ENCODE measurements at regions of chr3 and their contacts with region 1.

Region 1: DNA sequence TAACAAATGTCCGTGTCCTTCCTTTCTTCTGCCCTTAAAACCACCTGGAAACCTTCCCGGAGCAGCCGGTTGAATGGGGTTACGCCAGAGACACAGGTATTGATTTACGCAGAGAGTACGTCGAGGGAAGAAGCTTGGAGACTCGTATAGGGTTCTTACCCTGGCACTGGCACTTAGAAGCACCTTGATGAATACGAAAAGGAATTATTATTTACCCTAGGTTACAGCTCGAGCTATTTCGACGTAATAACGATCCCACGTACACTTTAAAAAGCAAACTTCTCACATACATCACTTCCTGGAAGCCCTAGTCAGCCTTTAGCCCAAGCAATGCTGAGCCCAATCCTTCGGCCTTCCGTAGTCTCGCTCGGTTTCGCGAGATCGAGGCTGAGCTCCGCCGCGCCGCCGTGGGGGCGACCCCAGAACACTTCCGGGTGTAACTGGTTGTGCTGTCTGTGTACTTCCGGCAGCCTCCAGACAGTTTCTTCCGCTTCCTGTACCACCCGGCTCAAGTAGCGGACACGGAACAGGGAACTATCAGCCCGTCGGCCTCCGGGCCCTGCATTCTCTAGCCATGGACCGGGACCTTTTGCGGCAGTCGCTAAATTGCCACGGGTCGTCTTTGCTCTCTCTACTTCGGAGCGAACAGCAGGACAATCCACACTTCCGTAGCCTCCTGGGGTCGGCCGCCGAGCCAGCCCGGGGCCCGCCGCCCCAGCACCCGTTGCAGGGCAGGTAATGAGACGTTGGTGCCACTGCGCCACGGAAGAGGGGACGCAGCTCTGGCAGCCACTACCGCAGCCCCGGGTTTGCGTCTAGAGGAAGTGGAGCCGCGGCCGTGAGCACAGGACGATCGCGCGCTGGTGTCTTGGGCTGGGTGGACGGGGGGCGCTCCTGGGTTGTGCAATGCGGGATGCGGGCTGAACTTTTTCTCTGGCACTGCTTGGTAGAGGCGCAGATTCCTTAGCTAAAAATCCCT is at the start of gene TTC14:
- DNase-seq: peak; percentile 96
- H3K4me3 ChIP-seq: peak within 1 kb of the TSS; percentile 84
- H3K27ac ChIP-seq: peak within 1 kb of the TSS; percentile 90
- H3K4me1 ChIP-seq: peaks cover 13% of the 10 kb centered on the region
- CTCF ChIP-seq: peak; percentile 60
- total RNA-seq, gene TTC14: 40.6 and 52.4 TPM in 2 replicates

Region 2: DNA sequence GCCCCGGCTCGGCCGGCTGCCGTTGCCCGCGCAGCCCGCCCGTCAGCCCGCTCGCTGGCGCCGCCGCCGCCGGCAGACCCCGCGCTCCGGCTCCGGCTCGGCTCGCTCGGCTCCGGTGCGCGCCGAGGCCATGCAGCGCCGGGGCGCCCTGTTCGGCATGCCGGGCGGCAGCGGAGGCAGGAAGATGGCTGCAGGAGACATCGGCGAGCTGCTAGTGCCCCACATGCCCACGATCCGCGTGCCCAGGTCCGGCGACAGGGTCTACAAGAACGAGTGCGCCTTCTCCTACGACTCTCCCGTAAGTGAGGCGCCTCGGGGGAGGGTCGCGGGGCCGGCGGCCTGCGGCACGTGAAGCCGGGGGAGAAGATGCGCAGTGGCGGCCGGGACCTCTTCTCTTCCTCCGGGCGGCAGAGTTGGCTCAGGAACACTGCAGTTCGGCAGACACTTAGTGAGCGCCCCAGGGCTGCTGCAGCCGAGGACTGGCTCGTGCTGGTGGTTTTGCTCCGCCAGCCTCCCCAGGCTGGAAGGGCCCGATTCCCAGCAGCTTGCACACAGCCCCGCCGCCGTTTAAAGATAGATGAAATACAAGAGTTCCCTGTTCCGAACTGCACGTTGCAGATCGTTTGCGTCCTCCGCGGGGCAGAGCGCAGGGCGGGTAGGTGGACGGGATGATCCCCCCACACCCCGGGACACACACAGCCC is 948.7 kb before region 1 on chr3:
- CTCF ChIA-PET with region 1: no interaction called
- POLR2A ChIA-PET with region 1: no interaction called
- intact Hi-C with region 1: loop called (anchors 5 kb)
- DNase-seq: peak; percentile 84
- H3K4me3 ChIP-seq: peak overlapping the region; percentile 96
- H3K27ac ChIP-seq: peak overlapping the region; percentile 81
- H3K4me1 ChIP-seq: peaks cover 32% of the 10 kb centered on the region
- CTCF ChIP-seq: peak; percentile 25; the same call in 1 of the 2 replicates

Region 3: DNA sequence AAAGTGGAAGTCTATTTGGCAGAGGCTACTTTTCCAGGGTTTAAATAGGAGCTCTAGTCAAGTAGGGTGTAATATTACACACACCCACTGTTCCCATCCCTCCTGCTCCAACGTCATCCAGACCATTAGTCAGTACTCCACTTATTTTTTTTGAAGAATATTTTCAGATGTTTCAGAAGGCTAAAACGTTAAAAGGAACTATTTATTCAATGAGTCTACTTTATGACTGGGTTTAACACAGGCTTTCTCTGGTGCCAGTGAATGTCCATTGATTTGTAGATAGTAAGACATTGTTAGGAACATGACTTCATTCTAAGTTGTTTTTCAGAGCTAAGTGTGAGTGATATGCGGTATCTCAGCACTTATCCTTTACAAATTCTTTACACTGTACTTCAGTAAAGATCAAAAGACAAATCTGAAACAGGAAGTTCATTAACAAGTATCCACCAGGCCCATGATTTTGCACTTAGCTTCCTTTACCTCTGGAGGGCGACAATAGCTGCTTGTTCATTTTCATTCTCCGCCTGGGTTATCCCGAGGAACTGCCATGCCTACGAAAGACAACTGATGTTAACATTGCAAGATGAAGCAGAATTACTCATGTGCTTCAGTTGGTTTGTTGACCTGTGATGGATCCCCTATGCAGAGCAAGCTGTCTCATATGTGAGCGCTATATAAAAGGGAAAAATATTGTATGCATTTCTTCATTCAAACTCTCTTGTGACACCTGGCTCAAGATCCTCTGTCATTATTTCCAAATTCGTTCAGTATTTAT is 790.5 kb before region 1 on chr3:
- CTCF ChIA-PET with region 1: no interaction called
- POLR2A ChIA-PET with region 1: no interaction called
- intact Hi-C with region 1: loop called (anchors 5 kb)
- DNase-seq: peak; percentile 77
- H3K4me3 ChIP-seq: no peak overlapping the region
- H3K27ac ChIP-seq: no peak overlapping the region
- H3K4me1 ChIP-seq: peaks cover 5% of the 10 kb centered on the region
- CTCF ChIP-seq: peak; percentile 94

Region 4: DNA sequence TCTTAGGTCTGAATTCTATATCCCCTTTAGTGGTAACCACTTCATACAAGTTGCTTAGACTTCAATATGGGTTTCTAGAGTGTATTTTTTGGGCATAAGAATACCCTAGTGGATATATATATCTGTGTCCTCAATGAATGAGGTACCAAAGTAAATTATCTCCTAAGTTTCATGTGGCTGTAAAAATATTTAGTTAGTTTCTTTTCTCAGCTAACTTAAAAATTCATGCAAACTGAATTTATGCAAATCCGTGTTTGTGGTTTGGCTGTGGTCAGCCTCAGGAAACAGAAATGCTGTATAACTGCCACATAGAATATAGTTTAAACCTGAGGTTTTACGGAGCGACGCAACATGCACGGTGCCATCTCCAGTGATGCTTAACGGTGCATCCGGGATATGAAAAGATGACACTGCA is 645.6 kb before region 1 on chr3:
- CTCF ChIA-PET with region 1: no interaction called
- POLR2A ChIA-PET with region 1: interaction called, 4 read pairs
- intact Hi-C with region 1: loop called (anchors 5 kb)
- DNase-seq: peak; percentile 90
- H3K4me3 ChIP-seq: peak overlapping the region; percentile 35
- H3K27ac ChIP-seq: peak overlapping the region; percentile 74
- H3K4me1 ChIP-seq: peaks cover 67% of the 10 kb centered on the region
- CTCF ChIP-seq: no peak

Region 5: GRCh38 chr3:180612364-180612763 is 10.4 kb after region 1 on chr3:
- CTCF ChIA-PET with region 1: no interaction called
- POLR2A ChIA-PET with region 1: interaction called, 10 read pairs
- intact Hi-C with region 1: no loop called
- DNase-seq: no peak
- H3K4me3 ChIP-seq: no peak overlapping the region
- H3K27ac ChIP-seq: no peak overlapping the region
- H3K4me1 ChIP-seq: no peaks in the 10 kb centered on the region
- CTCF ChIP-seq: no peak

Region 6: DNA sequence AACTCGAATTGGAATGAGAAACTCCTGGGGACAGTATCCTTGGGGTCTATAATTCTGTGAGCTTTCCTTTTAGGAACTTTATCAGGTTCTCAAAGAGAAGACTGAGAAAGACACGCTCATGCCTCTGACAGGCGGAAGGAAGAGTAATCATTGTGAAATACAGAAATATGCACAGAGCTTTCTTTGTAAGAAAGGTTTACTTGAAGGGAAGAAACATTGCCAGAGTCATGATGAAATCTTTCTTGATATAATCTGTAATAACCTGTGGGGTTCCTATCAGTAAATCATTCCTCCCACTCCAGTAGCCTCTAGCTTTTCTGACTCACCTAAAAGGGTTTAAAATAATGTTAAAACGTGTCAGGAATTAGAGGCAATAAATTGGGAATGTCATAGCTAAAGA is 160.9 kb after region 1 on chr3:
- CTCF ChIA-PET with region 1: no interaction called
- POLR2A ChIA-PET with region 1: no interaction called
- intact Hi-C with region 1: no loop called
- DNase-seq: no peak
- H3K4me3 ChIP-seq: no peak overlapping the region
- H3K27ac ChIP-seq: no peak overlapping the region
- H3K4me1 ChIP-seq: no peaks in the 10 kb centered on the region
- CTCF ChIP-seq: no peak

Region 7: DNA sequence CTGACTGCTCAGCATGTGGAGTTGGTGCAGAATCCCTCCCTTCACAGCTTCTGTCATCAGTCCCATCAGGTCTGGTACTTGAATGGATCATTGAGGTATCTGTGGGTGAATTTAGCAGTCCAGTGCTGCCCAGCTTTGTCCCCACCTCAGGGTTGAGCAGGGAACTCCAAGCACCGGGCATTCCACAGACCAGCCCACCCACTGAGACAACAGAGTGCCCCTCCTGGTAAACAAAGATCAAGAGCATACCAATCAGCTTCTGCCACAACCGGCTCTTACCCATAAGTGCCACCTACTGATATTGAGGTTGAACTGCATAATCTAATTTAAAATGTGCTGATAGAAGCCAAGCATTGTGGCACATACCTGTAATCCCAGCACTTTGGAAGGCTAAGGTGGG is 253.4 kb after region 1 on chr3:
- CTCF ChIA-PET with region 1: no interaction called
- POLR2A ChIA-PET with region 1: no interaction called
- intact Hi-C with region 1: no loop called
- DNase-seq: peak; percentile 20
- H3K4me3 ChIP-seq: no peak overlapping the region
- H3K27ac ChIP-seq: no peak overlapping the region
- H3K4me1 ChIP-seq: no peaks in the 10 kb centered on the region
- CTCF ChIP-seq: peak; percentile 63

Region 8: DNA sequence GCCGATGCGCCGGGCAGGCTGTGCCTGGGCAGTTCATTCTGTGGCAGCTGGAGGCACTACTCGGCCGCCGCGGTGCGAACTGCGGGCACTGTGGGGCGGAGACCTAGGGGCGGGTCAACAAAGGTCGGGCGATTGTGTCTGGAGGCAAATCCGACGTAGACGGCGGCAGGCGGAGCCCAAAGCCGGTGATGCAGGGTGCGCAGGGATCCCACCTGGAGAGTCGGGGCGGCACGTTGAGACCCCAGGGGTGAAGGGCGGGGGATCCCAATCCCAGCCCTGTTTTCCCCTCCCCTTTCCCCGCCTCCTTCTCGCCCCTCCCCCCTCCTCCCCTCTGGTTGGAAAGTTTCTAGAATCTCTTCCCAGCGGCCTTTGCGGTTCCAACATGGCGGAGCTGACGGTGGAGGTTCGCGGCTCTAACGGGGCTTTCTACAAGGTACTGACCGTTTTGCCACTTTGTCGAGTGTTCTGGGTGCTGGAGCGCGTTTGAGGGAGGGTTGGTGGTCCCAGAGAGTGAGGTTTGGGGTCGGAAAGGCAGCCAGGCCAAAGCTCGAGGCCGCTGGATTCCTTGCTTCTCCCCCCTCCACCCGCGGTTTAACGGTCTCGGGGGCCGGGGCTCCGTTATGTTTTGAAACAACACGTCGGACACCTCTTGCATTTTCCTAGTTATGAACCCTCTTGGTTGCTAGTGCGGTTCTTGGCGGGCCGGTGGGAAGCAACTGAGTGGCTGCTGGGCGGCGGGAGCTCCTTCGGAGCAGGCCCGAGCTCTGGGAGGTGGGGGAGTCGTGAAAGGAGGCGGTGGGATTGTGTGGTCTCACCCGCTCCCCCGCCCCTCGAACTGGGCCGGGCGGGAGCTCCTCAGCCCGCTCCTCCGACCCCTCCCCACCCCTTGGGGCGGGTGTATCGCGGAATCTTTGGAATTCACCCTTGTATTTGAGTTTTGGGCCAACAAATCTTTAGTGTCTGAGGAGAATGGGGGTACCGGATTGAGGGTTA is 310.6 kb after region 1 on chr3 and contains the start of gene FXR1:
- CTCF ChIA-PET with region 1: no interaction called
- POLR2A ChIA-PET with region 1: interaction called, 6 read pairs
- intact Hi-C with region 1: loop called (anchors 1 kb)
- DNase-seq: peak; percentile 96
- H3K4me3 ChIP-seq: peak within 1 kb of the TSS; percentile 98
- H3K27ac ChIP-seq: peak within 1 kb of the TSS; percentile 82
- H3K4me1 ChIP-seq: peaks cover 24% of the 10 kb centered on the region
- CTCF ChIP-seq: peak; percentile 72
- total RNA-seq, gene FXR1: 90.6 and 142 TPM in 2 replicates

Region 9: GRCh38 chr3:180989291-180990163 is 387.6 kb after region 1 on chr3 and contains the start of gene DNAJC19:
- CTCF ChIA-PET with region 1: no interaction called
- POLR2A ChIA-PET with region 1: interaction called, 3 read pairs
- intact Hi-C with region 1: loop called (anchors 5 kb)
- DNase-seq: peak; percentile 96
- H3K4me3 ChIP-seq: peak within 1 kb of the TSS; percentile 76
- H3K27ac ChIP-seq: peak within 1 kb of the TSS; percentile 34
- H3K4me1 ChIP-seq: peaks cover 10% of the 10 kb centered on the region
- CTCF ChIP-seq: no peak
- total RNA-seq, gene DNAJC19: 29.8 and 58.6 TPM in 2 replicates